GM10248 (cell line): ENCODE measurements at regions of chr7 and their contacts with region 1.

Region 1: DNA sequence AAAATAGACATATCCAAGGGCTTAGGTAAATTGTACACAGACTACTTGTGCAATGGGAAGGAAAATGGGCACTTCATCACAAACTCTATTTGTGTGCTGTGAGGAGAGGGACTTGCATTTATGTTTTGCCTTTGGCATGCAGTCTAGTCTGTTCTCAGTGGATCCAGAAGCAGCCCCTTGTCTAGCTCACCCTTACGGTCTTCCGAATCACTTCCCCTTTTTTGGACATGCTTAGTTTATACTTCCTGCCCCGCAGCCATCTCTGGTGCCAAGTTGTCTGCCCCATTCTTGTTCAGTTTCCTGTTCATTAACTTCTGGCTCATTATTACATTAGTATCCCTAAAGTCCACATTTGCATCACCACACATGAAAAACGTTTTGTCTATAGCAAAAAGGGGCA is 161.6 kb downstream of the NRCAM start:
- DNase-seq: peak; percentile 23
- CTCF ChIP-seq: no peak

Region 2: DNA sequence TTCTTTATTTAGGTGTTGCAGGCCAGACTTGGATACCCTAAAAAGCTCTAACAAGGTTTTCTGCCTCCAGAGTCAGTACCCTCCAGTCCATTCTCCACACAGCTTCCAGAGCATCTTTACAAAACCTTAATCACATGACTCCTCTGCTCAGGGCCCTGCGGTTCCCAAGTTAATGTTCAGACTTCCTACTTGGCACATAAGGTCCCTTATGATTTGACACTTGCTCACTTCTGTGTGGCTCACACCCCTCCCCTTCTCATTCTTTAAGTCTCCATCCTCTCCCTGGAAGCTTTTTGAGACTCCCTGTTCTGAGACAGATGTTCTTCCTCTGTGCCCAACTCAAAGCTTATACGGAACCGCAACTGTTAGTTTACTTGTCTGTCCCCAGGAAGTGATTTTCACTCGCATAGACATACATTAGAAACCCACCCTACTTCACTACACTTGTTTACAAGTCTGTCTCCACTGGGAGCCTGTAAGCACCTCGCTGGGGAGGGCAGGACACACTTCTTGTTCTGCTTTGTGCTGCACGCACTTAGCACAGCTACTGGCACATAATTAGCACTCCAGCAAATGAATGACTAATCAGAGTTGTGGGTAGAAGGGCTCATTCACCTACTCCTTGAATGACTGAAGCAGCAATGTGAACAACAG is 10.1 kb before region 1 on chr7:
- CTCF ChIA-PET with region 1: interaction called, 24 read pairs
- POLR2A ChIA-PET with region 1: no interaction called
- DNase-seq: no peak
- CTCF ChIP-seq: no peak